CD4-positive, alpha-beta memory T cell (primary cell): ENCODE measurements at regions of chr11 and their contacts with region 1.

Region 1: DNA sequence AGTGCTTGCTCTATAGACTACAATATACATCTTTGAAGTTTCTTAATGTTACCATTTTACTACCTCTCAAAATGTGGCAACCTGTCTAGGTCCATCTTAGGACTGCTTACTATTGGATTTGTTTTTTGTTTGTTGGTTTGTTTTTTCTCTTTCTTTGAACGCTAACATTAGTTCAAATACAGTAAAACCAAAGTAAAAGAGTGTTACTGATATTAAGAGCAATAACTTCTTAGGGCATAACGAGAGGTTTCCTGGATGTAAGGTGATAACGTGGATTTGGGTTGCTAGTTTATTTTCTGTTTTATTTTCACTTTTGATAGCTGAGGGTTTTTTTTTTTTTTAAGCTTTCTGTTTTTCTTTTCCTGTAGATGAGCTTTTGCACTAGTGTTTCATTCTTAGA is 43.6 kb downstream of the TMEM135 start:
- DNase-seq: peak in 4 of 5 donors; percentile 19 to 42 (median 25)
- H3K4me3 ChIP-seq: peak overlapping the region in 1 of 2 donors; percentile 35
- H3K4me3 Mint-ChIP-seq: peak overlapping the region; percentile 82 to 92 (median 88)
- H3K27ac ChIP-seq: peak overlapping the region; percentile 23
- H3K27ac Mint-ChIP-seq: peak overlapping the region; percentile 65 to 96 (median 93)
- H3K4me1 ChIP-seq: peaks cover 18% of the 10 kb centered on the region
- H3K4me1 Mint-ChIP-seq: peaks cover 17 to 25% (median 18%) of the 10 kb centered on the region in 4 donors
- H3K27me3 ChIP-seq: no peaks in the 10 kb centered on the region
- H3K27me3 Mint-ChIP-seq: no peaks in the 10 kb centered on the region

Region 2: DNA sequence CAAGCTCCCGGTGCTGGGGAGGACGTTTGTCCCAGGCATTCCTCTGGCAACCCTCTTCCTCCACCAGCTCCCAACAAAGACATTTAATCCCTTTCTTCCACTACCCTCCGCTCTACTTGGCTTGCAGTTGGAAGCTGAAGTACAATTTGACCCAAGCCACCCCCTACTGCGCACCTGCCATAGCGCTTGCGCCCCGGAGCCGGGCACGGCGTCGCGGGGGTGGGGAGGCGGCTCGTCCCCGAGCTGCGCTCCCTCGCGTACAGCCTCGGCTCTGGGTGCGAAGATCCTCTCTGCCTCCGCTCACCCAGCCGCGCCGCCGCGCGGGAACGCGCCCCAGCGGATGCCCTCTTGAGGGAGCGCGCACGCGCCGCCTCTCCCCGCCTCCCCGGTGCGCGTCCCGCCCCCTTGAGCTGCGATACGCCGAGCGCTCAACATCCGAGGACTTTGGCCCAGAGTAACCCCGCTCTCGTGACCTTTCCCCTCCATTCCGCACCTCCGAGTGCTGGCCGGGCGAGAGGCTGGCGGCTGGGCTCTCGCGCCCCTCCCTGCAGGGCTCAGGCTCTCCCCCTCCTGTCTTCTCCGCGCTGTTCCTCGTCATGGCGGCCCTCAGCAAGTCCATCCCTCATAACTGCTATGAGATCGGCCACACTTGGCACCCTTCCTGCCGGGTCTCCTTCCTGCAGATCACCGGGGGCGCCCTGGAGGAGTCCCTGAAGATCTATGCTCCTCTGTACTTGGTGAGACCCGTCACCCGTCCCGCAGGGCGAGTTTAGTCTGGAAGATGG is 43.7 kb before region 1 on chr11 and contains the start of gene TMEM135:
- CTCF ChIA-PET with region 1: interaction called, 4 read pairs
- POLR2A ChIA-PET with region 1: interaction called, 7 read pairs
- intact Hi-C with region 1: loop called (anchors 2 kb)
- DNase-seq: peak; percentile 89 to 91 (median 90)
- H3K4me3 ChIP-seq: peak within 1 kb of the TSS; percentile 86 to 96
- H3K4me3 Mint-ChIP-seq: peak within 1 kb of the TSS; percentile 94 to 99 (median 96)
- H3K27ac ChIP-seq: peak within 1 kb of the TSS; percentile 57
- H3K27ac Mint-ChIP-seq: peak within 1 kb of the TSS; percentile 79 to 95 (median 94)
- H3K4me1 ChIP-seq: peaks cover 27% of the 10 kb centered on the region
- H3K4me1 Mint-ChIP-seq: peaks cover 28 to 60% (median 42%) of the 10 kb centered on the region in 4 donors
- H3K27me3 ChIP-seq: no peaks in the 10 kb centered on the region
- H3K27me3 Mint-ChIP-seq: no peaks in the 10 kb centered on the region
- total RNA-seq, gene TMEM135: 9.1 to 11.2 TPM

Region 3: DNA sequence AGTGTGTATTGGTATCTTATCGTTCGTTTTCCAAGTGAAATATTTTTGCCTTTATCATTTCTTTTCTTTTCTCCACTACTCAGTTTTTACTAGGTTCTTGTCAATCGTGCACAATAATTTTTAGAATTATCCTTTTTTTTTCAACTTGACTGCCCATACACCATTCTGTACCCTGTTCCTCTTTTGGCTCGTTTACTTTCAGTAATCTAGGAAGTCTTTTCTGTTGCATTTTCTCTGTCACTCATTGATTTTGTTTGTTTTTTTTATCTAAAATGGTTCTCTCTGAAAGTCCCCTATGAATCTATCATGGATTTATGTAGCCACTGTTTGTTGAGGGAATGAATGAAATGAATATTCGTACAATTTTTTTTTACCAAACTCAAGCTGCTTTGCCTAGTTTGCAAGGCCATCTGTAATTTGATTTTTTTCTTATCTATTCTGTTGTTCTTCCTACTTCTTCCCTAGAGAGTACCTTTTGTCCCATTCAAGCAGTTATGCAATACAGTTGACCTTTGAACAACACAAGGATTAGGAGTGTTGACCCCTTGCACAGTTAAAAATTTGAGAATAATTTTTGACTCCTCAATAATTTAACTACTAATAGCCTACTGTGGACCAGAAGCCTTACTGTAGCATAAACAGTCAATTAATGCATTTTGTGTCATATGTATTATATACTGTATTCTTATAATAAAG is 122.7 kb after region 1 on chr11:
- CTCF ChIA-PET with region 1: no interaction called
- POLR2A ChIA-PET with region 1: no interaction called
- intact Hi-C with region 1: no loop called
- DNase-seq: no peak
- H3K4me3 ChIP-seq: no peak overlapping the region
- H3K4me3 Mint-ChIP-seq: peak overlapping the region in 1 of 8 donors; percentile 61
- H3K27ac ChIP-seq: no peak overlapping the region
- H3K27ac Mint-ChIP-seq: no peak overlapping the region
- H3K4me1 ChIP-seq: no peaks in the 10 kb centered on the region
- H3K4me1 Mint-ChIP-seq: peaks cover 0 to 8% (median 2%) of the 10 kb centered on the region in 4 donors
- H3K27me3 ChIP-seq: no peaks in the 10 kb centered on the region
- H3K27me3 Mint-ChIP-seq: no peaks in the 10 kb centered on the region